ENCODE measurements at regions of chr15 and their contacts with region 1.

Region 1: GRCh38 chr15:64809649-64810496 is 15.6 kb downstream of the PIF1 start:
- DNase-seq: peak; percentile 61 to 65 (median 64)
- H3K4me3 ChIP-seq: no peak overlapping the region
- H3K27ac ChIP-seq: no peak overlapping the region
- H3K4me1 ChIP-seq: peaks cover 0 to 9% (median 2%) of the 10 kb centered on the region in 4 experiments
- H3K27me3 ChIP-seq: peaks cover 0 to 3% (median 0%) of the 10 kb centered on the region in 5 experiments

Region 2: DNA sequence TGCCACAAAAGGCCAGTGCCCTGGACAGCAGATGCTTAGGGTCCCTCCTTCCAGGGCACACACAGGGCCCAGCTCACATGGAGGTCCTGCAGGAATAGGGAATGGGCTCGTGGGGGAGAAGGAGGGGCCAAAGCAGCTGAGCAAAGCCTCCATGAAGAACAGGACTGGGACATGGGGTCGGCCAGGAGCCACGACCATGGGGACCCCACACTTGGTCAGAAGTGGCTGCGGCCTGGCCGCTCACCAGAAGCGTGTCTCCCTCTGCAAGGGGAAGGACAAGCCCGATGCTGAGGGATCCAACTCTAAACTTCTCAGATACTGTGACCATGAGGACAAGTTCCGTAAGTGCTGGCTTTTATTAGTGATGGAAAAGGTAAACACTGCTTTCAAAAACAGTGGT is 49.8 kb before region 1 on chr15:
- CTCF ChIA-PET with region 1: interaction called, 13 read pairs
- POLR2A ChIA-PET with region 1: no interaction called
- DNase-seq: no peak
- H3K4me3 ChIP-seq: no peak overlapping the region
- H3K27ac ChIP-seq: no peak overlapping the region
- H3K4me1 ChIP-seq: no peaks in the 10 kb centered on the region
- H3K27me3 ChIP-seq: no peaks in the 10 kb centered on the region

Region 3: DNA sequence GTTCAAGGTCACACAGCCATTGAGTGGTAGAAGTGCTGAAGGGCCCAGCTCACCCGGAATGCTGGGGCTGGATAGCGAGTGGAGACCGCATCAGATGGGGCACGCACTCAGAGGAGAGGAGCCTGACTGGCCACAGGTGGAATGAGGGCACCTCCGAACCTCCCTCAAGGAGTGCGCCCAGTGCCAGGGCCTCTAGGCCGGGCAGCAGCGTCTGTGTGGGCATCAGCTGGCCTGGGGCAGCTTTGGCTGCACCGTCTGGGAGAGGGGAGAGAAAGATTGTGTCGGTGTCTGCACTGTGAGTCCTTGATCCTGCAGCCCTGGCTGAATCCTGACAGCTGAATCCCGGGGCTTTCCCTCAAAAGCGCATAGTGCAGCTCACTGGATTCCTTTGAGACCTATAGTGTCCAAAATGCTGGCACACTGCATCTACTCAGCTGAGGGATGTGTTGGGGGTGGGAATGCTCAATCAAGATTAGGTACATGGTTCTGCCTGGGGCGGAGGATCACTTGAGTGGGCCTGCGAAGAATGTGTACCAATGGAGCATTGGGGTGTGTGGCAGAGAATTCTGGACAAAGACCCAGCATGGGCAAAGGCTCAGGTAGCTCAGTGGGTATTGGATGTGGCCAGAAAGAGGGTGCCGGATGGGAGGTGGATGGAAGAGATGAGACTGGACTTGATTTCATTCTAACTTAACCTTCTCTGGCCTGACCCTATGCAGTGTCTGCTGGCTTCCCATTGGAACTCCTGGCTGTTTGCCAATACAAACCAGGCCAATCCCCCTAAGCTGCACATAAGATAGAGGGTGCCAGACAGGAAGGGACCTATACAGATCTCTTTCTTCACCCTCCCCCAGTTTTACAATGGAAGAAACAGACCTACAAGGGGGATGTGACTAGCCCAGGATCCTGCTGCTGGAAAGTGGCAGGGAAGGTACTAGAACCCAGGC is 102.8 kb after region 1 on chr15:
- CTCF ChIA-PET with region 1: no interaction called
- POLR2A ChIA-PET with region 1: no interaction called
- DNase-seq: no peak
- H3K4me3 ChIP-seq: peak overlapping the region in 2 of 7 experiments; percentile 74
- H3K27ac ChIP-seq: no peak overlapping the region
- H3K4me1 ChIP-seq: peaks cover 0 to 37% (median 24%) of the 10 kb centered on the region in 4 experiments
- H3K27me3 ChIP-seq: peaks cover 0 to 11% (median 4%) of the 10 kb centered on the region in 5 experiments